Activated CD4-positive, alpha-beta T cell treated with anti-CD3 and anti-CD28 coated beads, Interleukin-2, amount 10 ng/mL, durations not matched to agents 24 days and 14 days (primary cell): ENCODE measurements at regions of chr5 and their contacts with region 1.

Region 1: DNA sequence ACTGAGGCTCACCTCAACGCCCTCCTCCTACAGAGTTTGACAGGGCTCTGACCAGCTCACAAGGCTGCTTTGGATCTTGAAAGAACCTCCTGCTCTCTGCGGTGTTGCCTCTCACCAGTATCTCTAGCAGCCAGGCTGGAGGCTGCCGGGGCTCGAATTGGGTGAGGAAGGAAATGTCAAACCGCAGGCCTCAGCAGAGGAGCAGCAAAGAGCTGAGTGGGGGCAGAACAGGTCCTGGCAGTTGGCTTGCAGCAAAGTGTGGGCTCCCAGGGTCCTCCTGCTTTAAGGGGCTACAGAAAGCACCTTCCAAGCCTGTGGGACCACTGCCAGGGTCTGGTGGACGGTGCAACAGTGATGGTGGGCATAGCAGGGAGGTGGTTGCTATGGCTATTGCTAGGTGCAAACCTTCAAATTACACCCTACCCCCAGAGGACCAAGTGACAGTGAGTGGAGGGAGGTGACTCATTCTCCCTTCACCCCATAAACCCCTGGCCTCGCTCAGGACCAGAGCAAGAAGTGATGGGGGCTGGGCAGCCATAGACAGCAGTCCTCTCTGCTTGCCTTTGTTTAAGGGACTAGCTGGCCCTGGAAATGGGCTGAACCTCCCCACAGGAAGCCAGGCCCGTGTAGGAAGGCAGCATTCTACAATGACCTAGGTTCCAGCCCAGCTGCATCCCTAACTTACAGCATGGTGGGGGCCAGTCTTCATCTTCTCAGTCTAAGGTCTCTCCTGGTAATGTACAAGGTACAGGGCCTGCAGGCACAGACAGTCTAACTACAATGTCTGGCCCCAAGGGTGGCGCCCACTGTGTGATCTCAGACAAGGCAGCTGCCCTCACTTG is 18.7 kb downstream of the LCP2 start:
- DNase-seq: peak; percentile 96
- H3K4me3 Mint-ChIP-seq: peak overlapping the region; percentile 74
- H3K27ac Mint-ChIP-seq: peak overlapping the region; percentile 99
- H3K4me1 Mint-ChIP-seq: peaks cover 89% of the 10 kb centered on the region
- H3K27me3 Mint-ChIP-seq: no peaks in the 10 kb centered on the region

Region 2: DNA sequence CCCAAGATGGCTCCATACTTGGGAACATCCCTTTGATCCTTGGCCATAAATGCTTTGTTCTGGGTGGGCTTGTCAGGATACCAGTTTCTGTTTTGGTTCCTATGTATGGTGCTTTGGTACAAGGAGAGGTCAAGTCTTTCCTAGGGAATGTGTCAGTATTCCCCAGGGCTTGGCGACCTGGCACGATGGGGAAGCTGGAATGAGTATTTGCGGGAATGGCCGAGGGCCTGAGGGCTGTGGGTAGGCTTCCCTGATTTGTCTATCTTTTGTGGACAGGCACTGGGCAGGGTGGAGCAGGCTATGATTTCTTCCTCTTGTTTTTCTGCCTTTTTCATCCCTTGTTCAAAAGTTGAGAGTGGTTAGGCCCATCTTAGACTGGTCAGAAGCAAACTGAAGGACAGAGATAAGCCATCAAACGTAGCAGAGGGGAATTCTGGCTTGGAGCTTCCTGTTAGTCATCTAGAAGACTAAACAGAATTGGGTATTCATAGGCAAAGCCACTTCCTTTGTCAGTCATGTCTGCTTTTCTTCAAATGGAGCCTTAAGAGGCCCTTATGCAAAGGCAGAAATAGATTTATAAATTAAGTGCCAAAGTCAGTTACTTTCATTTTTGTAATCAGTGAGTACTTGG is 628.0 kb before region 1 on chr5:
- intact Hi-C with region 1: loop called (anchors 10 kb)
- DNase-seq: peak; percentile 79
- H3K4me3 Mint-ChIP-seq: peak overlapping the region; percentile 83
- H3K27ac Mint-ChIP-seq: peak overlapping the region; percentile 97
- H3K4me1 Mint-ChIP-seq: peaks cover 88% of the 10 kb centered on the region
- H3K27me3 Mint-ChIP-seq: no peaks in the 10 kb centered on the region

Region 3: DNA sequence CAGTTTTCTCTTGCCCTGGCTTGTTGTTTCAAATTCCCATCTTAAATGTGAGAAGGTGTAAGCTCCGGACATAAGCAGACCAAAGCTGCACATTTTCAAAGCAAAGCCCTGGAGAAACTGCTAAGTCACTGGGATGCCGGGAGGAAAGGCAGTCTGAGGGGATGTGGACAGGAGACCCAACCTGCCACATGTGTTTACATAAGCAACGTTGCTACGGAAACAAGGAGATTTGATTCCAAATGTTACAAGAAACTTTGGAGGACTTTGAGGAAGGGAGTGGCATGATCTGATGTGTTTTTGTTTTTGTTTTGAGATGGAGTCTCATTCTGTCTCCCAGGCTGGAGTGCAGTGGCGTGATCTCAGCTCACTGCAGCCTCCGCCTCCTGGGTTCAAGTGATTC is 272.8 kb before region 1 on chr5:
- intact Hi-C with region 1: no loop called
- DNase-seq: no peak
- H3K4me3 Mint-ChIP-seq: no peak overlapping the region
- H3K27ac Mint-ChIP-seq: no peak overlapping the region
- H3K4me1 Mint-ChIP-seq: no peaks in the 10 kb centered on the region
- H3K27me3 Mint-ChIP-seq: no peaks in the 10 kb centered on the region

Region 4: GRCh38 chr5:170262061-170263045 is 16.5 kb before region 1 on chr5:
- intact Hi-C with region 1: loop called (anchors 1 kb)
- DNase-seq: peak; percentile 86
- H3K4me3 Mint-ChIP-seq: peak overlapping the region; percentile 65
- H3K27ac Mint-ChIP-seq: peak overlapping the region; percentile 89
- H3K4me1 Mint-ChIP-seq: peaks cover 82% of the 10 kb centered on the region
- H3K27me3 Mint-ChIP-seq: no peaks in the 10 kb centered on the region

Region 5: GRCh38 chr5:170293273-170293672 is 14.4 kb after region 1 on chr5:
- intact Hi-C with region 1: loop called (anchors 1 kb)
- DNase-seq: peak; percentile 86
- H3K4me3 Mint-ChIP-seq: peak overlapping the region; percentile 97
- H3K27ac Mint-ChIP-seq: peak overlapping the region; percentile 78
- H3K4me1 Mint-ChIP-seq: peaks cover 76% of the 10 kb centered on the region
- H3K27me3 Mint-ChIP-seq: no peaks in the 10 kb centered on the region

Region 6: GRCh38 chr5:170333161-170333910 is 54.5 kb after region 1 on chr5:
- intact Hi-C with region 1: loop called (anchors 1 kb)
- DNase-seq: peak; percentile 83
- H3K4me3 Mint-ChIP-seq: peak overlapping the region; percentile 80
- H3K27ac Mint-ChIP-seq: no peak overlapping the region
- H3K4me1 Mint-ChIP-seq: peaks cover 58% of the 10 kb centered on the region
- H3K27me3 Mint-ChIP-seq: no peaks in the 10 kb centered on the region

Region 7: GRCh38 chr5:171387345-171387969 is 1108.6 kb after region 1 on chr5 and contains the start of gene NPM1:
- intact Hi-C with region 1: loop called (anchors 5 kb)
- DNase-seq: peak; percentile 99
- H3K4me3 Mint-ChIP-seq: peak within 1 kb of the TSS; percentile 94
- H3K27ac Mint-ChIP-seq: peak within 1 kb of the TSS; percentile 100
- H3K4me1 Mint-ChIP-seq: peaks cover 41% of the 10 kb centered on the region
- H3K27me3 Mint-ChIP-seq: peaks cover 10% of the 10 kb centered on the region
- total RNA-seq, gene NPM1: 3,066 and 3,162 TPM in 2 replicates